Heart right ventricle (tissue), 16 donors: ENCODE measurements at regions of chr3 and their contacts with region 1.

Region 1: DNA sequence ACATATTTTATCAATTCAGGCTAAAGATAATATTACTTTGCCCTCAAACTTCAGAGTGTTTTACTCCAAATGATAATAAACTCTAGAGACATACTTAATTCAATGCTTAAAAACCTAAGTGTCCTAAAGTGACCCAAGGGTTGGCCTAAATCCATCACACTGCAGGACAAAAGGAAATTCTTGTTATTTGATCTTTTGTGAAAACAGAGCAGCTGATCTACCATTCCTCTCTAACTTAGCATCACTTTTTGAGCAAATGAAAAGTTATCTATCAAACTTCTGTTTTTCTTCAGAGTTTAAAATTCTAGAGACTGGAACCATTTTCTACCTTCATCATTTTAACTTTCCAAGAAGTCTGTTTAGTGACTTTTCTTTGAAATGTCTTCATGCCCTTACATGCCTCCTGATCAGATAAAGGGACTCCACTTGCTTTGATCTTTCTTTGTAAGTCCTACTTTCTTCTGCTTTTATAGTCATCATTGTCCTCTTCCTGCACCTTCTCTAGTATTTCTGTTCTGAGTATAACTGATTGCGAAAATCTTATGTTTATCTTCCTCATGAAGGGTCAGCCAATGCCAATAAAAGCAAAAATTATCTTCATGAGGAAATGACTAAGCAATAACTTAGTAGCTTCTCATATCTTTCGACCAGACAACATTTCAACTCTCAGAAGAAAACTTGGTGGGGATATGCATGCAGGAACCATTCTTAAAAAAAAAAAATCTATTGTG is 378.7 kb upstream of the TGFBR2 start:
- DNase-seq: peak in 1 of 2 donors; percentile 12
- ATAC-seq: peak; percentile 19 to 79 (median 64)
- H3K4me3 ChIP-seq: no peak overlapping the region
- H3K27ac ChIP-seq: peak overlapping the region in 9 of 10 donors; percentile 5 to 68 (median 51)
- H3K4me1 ChIP-seq: peaks cover 6 to 60% (median 44%) of the 10 kb centered on the region in 9 donors
- H3K27me3 ChIP-seq: no peaks in the 10 kb centered on the region
- CTCF ChIP-seq: no peak

Region 2: DNA sequence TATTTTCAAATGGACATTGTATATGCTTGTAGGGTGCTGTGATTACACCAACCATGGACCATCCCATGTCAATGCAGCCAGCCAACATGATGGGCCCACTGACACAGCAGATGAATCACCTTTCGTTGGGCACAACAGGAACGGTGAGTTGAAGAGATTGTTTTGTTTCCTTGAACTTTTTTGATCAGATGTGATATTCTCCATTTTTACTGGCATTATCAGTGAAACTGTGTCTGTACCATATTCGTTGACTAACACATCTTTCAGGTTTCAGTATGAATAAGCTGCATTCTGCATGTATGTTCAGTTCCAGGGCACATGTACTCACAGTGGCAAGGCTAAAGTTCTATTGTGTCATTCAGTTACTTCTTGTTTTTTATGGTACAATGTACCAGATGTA is 291.7 kb before region 1 on chr3:
- intact Hi-C with region 1: no loop called
- DNase-seq: no peak
- ATAC-seq: no peak
- H3K4me3 ChIP-seq: no peak overlapping the region
- H3K27ac ChIP-seq: no peak overlapping the region
- H3K4me1 ChIP-seq: peaks cover 0 to 36% (median 13%) of the 10 kb centered on the region in 9 donors
- H3K27me3 ChIP-seq: no peaks in the 10 kb centered on the region
- CTCF ChIP-seq: no peak

Region 3: DNA sequence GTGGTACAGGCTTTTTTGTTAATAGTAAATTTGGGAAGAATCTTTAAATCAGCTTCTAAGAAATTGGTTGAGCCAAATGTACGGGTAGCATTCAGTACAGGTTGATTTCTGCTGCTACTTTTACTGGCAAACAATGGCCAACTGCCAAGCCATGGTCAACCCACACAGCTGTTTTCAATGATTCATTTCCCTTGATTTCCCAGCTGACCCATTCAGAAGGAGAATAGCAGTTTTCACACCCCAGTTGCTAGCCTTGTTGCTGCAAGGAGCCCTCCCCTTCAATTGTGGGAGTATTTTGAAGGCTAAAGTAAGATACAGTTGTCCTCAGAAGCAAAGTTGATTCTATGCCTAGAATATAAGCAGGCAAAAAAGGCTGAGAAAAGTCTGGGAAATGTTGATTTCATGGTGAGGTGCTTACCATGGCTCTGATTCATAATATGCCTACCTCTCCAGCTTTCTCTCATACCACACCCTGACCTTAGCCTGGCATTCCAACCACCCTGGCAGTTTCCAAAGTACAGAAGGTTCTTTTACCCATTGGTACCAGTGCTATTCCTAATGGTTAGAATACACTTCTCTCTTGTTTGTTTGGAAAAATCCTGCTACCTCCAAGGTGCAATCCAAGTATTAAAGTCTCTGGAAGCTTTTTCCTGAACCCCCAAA is 58.4 kb after region 1 on chr3:
- intact Hi-C with region 1: loop called in 5 of 10 experiments (anchors 5 kb)
- DNase-seq: peak; percentile 54 to 86
- ATAC-seq: peak; percentile 87 to 96 (median 93)
- H3K4me3 ChIP-seq: no peak overlapping the region
- H3K27ac ChIP-seq: peak overlapping the region in 8 of 10 donors; percentile 21 to 76 (median 64)
- H3K4me1 ChIP-seq: peaks cover 0 to 65% (median 36%) of the 10 kb centered on the region in 9 donors
- H3K27me3 ChIP-seq: no peaks in the 10 kb centered on the region
- CTCF ChIP-seq: no peak

Region 4: GRCh38 chr3:30347679-30348216 is 120.0 kb after region 1 on chr3:
- intact Hi-C with region 1: loop called in 3 of 10 experiments (anchors 5 to 10 kb)
- DNase-seq: no peak
- ATAC-seq: no peak
- H3K4me3 ChIP-seq: no peak overlapping the region
- H3K27ac ChIP-seq: peak overlapping the region in 3 of 10 donors; percentile 39 to 66 (median 65)
- H3K4me1 ChIP-seq: peaks cover 3 to 85% (median 51%) of the 10 kb centered on the region in 9 donors
- H3K27me3 ChIP-seq: no peaks in the 10 kb centered on the region
- CTCF ChIP-seq: no peak

Region 5: DNA sequence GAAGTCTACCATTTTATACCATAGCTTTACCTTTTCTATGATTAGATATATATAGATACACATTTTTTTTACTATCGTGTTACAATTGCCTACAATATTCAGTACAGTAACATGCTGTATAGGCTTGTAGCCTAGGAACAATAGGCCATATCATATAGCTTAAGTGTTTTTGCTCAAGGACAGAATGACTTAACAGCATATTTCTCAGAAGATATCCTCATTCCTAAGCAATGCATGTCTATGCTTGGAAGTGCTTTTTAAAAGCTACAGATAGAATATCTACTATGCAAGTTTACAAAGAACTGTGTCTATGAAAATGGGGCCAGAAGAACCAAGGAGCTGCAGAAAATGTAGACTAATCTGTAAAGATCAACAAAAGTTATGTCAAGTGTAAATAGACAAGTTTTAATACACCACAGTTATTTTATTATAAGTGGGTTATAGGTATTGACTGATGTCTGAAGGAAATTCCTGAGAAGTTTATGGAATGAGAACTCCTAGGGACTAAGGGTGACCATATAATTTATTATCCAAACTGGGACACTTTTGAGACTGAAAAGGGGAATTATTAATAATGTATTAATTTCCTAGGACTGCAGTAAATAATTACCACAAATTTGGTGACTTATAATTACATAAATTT is 240.0 kb after region 1 on chr3:
- intact Hi-C with region 1: no loop called
- DNase-seq: no peak
- ATAC-seq: no peak
- H3K4me3 ChIP-seq: no peak overlapping the region
- H3K27ac ChIP-seq: no peak overlapping the region
- H3K4me1 ChIP-seq: peaks cover 4 to 27% (median 18%) of the 10 kb centered on the region in 9 donors
- H3K27me3 ChIP-seq: no peaks in the 10 kb centered on the region
- CTCF ChIP-seq: no peak